Activated naive CD4-positive, alpha-beta T cell treated with anti-CD3 and anti-CD28 coated beads for 36 hours (primary cell): ENCODE measurements at regions of chr11 and their contacts with region 1.

Region 1: GRCh38 chr11:84714316-84714780 is 912.8 kb downstream of the DLG2 start:
- DNase-seq: peak; percentile 66
- H3K4me3 Mint-ChIP-seq: peak overlapping the region; percentile 44
- H3K27ac Mint-ChIP-seq: no peak overlapping the region
- H3K4me1 Mint-ChIP-seq: peaks cover 4% of the 10 kb centered on the region
- H3K27me3 Mint-ChIP-seq: peaks cover 3% of the 10 kb centered on the region

Region 2: DNA sequence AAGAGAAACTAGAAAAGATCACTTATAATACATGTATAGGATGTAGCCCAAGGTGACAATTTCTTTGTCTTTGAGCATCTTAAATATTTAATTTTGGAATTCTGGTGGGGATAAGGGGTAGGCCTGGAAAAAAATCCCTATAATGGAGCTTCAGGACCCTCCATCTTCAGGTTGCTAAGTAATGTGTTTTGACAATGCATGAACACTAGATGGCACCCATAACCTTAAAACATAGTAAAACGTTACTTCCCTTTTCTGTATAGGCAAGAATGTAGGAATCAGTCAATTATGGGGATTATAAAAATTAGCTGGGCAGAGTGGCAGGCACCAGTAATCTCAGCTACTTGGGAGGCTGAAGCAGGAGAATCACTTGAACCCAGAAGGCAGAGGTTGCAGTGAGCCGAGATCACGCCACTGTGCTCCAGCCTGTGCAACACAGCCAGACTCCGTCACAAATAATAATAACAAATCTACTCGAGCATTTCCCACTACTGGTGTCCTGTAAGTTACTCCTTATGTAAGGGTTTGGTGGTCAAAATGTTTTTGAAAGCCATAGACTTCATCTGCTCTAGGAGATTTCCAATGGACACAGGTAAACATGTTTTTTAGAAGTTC is 886.3 kb before region 1 on chr11:
- CTCF ChIA-PET with region 1: no interaction called
- intact Hi-C with region 1: loop called (anchors 5 kb)
- DNase-seq: no peak
- H3K4me3 Mint-ChIP-seq: no peak overlapping the region
- H3K27ac Mint-ChIP-seq: no peak overlapping the region
- H3K4me1 Mint-ChIP-seq: peaks cover 2% of the 10 kb centered on the region
- H3K27me3 Mint-ChIP-seq: no peaks in the 10 kb centered on the region

Region 3: DNA sequence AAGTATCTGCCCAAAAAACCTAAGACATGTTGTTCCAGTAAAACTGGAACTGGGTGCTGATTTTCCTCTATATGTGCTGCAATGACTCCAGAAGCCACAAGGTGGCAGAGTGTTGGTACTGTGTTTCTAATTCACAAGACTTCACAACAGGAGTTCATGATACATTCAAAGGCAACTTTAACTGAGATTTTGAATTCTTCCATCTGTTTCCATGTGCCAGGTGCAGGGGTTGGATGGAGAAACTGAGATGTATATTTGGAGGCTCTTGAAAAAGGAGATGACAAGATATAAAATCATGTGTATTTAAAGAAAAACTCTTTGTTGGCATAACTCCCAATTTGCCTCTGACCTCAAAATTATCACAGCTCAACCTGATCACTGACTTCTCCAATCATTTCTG is 329.6 kb before region 1 on chr11:
- CTCF ChIA-PET with region 1: interaction called, 4 read pairs
- intact Hi-C with region 1: loop called (anchors 2 kb)
- DNase-seq: peak; percentile 51
- H3K4me3 Mint-ChIP-seq: no peak overlapping the region
- H3K27ac Mint-ChIP-seq: no peak overlapping the region
- H3K4me1 Mint-ChIP-seq: no peaks in the 10 kb centered on the region
- H3K27me3 Mint-ChIP-seq: no peaks in the 10 kb centered on the region

Region 4: DNA sequence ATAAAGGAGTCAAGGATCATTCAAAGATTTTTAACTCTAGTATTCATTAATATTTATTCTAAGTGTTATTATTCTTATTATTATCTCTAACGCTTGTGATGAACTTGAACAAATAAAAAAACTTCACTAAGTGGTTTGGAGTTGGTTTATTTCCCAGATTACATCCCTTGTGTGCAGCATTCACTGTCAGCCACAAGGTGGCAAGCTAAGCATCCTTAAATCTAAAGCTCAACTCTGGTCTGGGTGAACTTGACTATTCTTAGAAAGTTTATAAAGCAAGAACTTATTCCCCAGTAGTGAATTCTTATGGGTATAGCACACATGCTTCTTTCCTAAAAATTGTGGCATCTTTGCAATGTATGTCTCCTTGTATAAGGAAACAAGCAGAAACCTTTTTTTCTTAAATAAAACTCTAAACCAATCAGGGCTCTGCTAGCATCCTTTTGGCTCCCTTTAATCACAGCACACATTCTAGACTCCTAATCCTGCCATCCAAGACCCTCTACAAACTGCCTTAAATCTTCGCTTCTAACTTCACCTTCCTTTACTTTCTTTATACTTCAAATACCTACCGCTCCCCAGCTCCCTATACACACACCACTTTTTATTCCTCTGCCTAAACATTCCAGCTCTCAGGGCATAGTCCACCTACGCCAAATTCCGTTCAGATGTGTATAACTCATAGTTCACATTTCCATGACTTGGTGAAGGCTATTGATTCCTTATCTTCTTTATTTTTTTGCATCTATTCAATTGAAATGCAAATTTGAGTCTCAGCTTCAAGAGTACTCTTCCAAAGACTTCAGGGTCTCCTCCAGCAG is 156.1 kb before region 1 on chr11:
- CTCF ChIA-PET with region 1: no interaction called
- intact Hi-C with region 1: loop called (anchors 1 kb)
- DNase-seq: peak; percentile 35
- H3K4me3 Mint-ChIP-seq: no peak overlapping the region
- H3K27ac Mint-ChIP-seq: no peak overlapping the region
- H3K4me1 Mint-ChIP-seq: no peaks in the 10 kb centered on the region
- H3K27me3 Mint-ChIP-seq: no peaks in the 10 kb centered on the region

Region 5: DNA sequence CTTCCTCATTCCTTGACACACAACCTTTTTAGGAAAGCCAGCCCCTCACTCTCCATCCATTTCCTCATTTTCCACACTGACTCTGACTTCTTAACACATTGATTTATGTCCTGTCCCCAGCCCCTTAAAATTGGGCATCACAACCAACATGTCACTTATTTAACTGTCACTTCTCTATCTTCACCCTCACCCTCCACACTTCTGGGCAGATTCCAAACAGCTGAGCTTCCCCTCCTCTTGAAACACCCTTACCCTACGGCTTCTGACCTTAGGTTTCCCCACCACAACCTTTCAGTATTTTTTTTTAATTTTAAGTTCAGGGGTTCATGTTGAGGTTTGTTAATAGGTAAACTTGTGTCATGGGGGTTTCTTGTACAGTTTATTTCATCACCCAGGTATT is 216.5 kb after region 1 on chr11:
- CTCF ChIA-PET with region 1: no interaction called
- intact Hi-C with region 1: no loop called
- DNase-seq: no peak
- H3K4me3 Mint-ChIP-seq: no peak overlapping the region
- H3K27ac Mint-ChIP-seq: no peak overlapping the region
- H3K4me1 Mint-ChIP-seq: no peaks in the 10 kb centered on the region
- H3K27me3 Mint-ChIP-seq: no peaks in the 10 kb centered on the region

Region 6: DNA sequence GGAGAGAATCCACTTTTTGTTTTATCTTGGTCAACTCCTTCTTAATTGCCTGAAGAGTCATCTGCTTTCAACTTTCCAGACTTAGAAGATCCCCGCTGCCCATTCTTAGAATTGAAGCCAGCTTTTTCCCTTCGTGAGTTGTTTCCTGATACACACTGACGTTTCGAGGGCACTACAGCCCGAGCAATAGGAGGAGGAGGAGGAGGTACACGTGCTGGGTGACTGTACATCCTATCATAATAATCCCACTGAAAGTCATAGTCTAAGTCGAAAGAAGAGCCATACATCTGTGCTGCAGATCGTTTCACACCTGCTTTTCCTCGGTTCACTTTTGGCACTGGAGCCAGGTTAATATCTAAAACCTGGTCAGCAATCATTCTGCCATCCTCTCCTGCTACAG is 306.7 kb after region 1 on chr11:
- CTCF ChIA-PET with region 1: no interaction called
- intact Hi-C with region 1: no loop called
- DNase-seq: no peak
- H3K4me3 Mint-ChIP-seq: no peak overlapping the region
- H3K27ac Mint-ChIP-seq: no peak overlapping the region
- H3K4me1 Mint-ChIP-seq: no peaks in the 10 kb centered on the region
- H3K27me3 Mint-ChIP-seq: no peaks in the 10 kb centered on the region